Right ventricle myocardium inferior (tissue), 1 donor: ENCODE measurements at regions of chr15 and their contacts with region 1.

Region 1: GRCh38 chr15:63004211-63004610 is 38.3 kb upstream of the TPM1 start:
- DNase-seq: no peak
- ATAC-seq: no peak

Region 2: DNA sequence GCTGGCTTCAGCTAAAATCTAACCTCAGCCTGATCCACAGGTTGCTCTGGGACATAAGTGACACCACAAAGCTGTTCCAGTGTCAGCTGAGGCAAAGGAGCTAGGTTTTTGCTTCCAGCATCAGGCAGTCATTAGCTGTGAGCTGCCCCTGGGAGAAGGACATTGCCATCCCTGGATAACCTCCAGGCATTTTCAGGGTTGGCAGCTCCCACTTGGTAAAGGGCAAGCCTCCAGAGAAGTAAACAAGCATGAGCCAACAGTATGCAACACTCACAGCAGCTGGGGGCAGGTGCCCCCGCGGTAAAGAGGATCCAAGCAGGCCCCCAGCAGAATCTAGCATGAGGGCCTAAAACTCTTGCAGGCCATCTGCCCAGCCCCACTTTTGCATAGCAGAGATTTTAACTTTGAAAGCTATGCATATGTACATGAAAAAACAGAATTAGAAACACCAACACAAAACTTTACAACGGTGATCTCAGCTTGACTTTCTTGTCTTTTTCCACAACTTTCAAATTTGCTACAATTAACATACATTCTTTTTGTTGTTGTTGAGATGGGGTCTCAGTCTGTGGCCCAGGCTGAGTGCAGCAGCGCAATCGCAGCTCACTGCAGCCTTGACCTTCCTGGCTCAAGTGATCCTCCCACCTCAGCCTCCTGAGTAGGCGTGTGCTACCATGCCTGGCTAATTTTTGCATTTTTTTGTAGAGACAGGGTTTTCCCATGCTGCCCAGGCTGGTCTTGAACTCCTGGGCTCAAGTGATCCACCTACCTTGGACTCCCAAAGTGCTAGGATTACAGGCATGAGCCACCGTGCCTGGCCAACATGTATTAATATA is 45.5 kb before region 1 on chr15:
- intact Hi-C with region 1: loop called (anchors 5 kb)
- DNase-seq: no peak
- ATAC-seq: peak; percentile 81